ENCODE measurements at regions of chr7 and their contacts with region 1.

Region 1: DNA sequence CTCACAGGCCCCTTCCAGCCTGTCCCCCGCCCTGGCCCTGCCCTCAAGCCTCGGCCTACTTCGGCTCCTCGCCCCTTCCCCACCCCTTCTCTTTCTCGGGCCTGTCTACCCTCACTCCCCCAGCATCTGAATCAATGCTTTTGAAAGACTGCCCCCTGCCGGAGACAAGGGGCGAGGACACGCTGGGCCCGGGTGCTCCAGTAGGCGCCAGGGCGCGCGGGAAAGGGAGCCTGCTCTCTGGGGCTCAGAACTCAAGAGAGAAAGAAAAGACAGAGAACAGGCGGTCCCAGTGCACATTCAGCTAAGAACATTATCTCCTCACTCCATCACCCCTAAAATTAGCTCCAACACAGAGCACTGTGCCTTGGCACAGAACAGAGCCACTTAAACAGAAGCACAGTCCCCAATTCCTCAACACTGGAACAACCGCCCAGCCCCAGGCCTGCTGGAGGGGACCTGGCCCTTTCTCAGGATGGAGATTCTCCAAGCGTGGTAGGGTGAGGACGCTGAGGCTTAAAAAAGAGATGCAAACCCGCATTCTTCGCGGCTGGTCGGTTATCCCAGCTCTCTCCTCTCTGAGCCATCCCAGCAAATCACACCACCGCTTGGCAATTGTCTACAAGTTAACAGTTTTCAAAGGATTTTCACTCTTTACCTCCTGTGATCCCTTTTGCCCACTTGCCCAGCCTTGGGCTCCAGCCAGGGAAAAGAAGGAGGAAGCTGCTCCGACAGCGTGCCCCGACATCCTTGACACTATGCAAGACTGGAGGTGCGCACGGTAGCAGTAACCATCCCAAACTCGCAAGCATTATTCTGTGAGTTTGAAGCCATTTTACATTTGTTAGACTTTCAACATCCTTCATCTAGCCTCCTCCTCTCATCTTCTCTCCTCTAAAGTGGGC is 2.1 kb downstream of the GIGYF1 start:
- DNase-seq: peak; percentile 86
- ATAC-seq: peak; percentile 76
- H3K4me3 Mint-ChIP-seq: peak overlapping the region; percentile 96
- H3K27ac Mint-ChIP-seq: peak overlapping the region; percentile 71
- H3K4me1 Mint-ChIP-seq: peaks cover 28% of the 10 kb centered on the region
- H3K27me3 Mint-ChIP-seq: peaks cover 13% of the 10 kb centered on the region

Region 2: DNA sequence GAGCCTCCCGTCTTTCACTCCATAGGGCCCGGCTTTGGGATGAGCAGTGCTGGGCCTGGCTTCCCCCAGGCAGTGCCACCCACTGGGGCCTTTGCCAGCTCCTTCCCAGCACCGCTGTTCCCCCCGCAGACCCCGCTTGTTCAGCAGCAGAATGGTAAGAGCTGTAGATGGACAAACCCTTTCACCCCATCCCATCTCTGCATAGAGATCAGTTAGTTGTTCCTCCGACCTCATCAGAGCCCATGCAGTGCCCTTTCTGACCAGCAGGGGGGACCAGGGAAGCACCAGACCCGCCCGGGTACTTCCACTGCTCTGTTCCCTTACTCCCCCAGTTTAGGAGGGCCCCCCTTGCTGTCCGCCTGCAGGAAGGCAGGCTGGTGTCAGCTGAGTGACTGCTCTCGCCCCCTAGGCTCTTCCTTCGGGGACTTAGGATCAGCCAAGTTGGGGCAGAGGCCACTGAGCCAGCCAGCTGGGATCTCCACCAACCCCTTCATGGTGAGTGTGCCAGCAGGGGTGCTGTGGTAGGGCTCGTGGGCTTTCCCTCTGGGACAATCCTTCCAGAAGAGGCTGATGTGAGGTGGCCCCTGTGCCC is 128.0 kb before region 1 on chr7:
- CTCF ChIA-PET with region 1: interaction called, 23 read pairs
- DNase-seq: peak; percentile 87
- ATAC-seq: peak; percentile 62
- H3K4me3 Mint-ChIP-seq: no peak overlapping the region
- H3K27ac Mint-ChIP-seq: peak overlapping the region; percentile 44
- H3K4me1 Mint-ChIP-seq: peaks cover 31% of the 10 kb centered on the region
- H3K27me3 Mint-ChIP-seq: no peaks in the 10 kb centered on the region

Region 3: GRCh38 chr7:100611974-100612729 is 79.8 kb before region 1 on chr7 and contains the start of gene MOSPD3:
- CTCF ChIA-PET with region 1: interaction called, 49 read pairs
- DNase-seq: peak; percentile 99
- ATAC-seq: peak; percentile 95
- H3K4me3 Mint-ChIP-seq: peak within 1 kb of the TSS; percentile 87
- H3K27ac Mint-ChIP-seq: peak within 1 kb of the TSS; percentile 100
- H3K4me1 Mint-ChIP-seq: peaks cover 22% of the 10 kb centered on the region
- H3K27me3 Mint-ChIP-seq: no peaks in the 10 kb centered on the region
- total RNA-seq, gene MOSPD3: 22.2 to 28.8 TPM

Region 4: GRCh38 chr7:100632951-100633717 is 58.8 kb before region 1 on chr7:
- CTCF ChIA-PET with region 1: interaction called, 77 read pairs
- DNase-seq: peak; percentile 79
- ATAC-seq: peak; percentile 82
- H3K4me3 Mint-ChIP-seq: peak overlapping the region; percentile 82
- H3K27ac Mint-ChIP-seq: peak overlapping the region; percentile 92
- H3K4me1 Mint-ChIP-seq: peaks cover 40% of the 10 kb centered on the region
- H3K27me3 Mint-ChIP-seq: no peaks in the 10 kb centered on the region

Region 5: DNA sequence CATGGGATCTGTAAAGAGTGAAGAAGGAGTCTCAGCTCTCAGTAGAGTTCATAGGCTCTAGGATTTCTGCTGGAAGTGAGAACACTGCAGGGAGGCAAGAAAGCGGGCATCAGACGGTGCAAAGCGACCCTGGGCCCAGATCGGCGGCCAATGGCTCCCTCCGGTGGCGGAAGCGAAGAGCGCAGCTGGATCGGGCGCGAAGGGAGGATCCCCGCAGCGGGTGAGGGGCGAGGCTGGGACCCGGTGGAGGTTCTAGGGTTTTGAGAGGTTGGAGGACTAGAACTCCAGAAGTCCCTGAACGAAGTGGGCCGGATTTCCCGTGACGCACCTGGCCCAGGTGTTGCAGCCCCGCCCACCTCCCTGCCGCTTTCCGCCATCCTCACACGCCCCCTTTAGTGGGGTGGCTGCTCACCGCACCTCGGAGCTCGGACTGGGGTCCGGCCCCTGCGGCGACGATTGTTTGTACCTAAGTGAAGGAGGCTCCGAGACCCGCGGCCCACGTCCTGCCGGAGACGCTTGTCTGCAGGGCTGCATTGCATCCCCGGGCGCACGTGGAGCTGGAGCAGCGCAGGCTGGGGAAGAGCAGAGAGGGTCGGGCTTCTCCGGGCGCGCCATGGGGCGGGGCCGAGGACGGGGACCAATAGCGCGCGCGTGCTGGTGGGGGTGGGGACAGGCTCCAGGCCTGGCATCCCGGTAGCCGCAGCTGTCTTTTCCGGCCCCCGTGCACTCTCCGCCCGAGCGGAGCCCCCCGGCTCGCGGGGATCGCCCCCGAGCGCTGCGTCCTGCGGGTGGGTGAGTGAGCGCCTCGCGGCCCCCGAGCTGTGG is 160.3 kb after region 1 on chr7 and contains the start of gene SLC12A9:
- CTCF ChIA-PET with region 1: interaction called, 11 read pairs
- DNase-seq: peak; percentile 91
- ATAC-seq: peak; percentile 99
- H3K4me3 Mint-ChIP-seq: peak within 1 kb of the TSS; percentile 89
- H3K27ac Mint-ChIP-seq: peak within 1 kb of the TSS; percentile 67
- H3K4me1 Mint-ChIP-seq: peaks cover 21% of the 10 kb centered on the region
- H3K27me3 Mint-ChIP-seq: no peaks in the 10 kb centered on the region
- total RNA-seq, gene SLC12A9: 28.6 to 30.1 TPM

Region 6: GRCh38 chr7:100882785-100883526 is 191.0 kb after region 1 on chr7:
- CTCF ChIA-PET with region 1: no interaction called
- DNase-seq: no peak
- ATAC-seq: no peak
- H3K4me3 Mint-ChIP-seq: no peak overlapping the region
- H3K27ac Mint-ChIP-seq: peak overlapping the region; percentile 44
- H3K4me1 Mint-ChIP-seq: peaks cover 75% of the 10 kb centered on the region
- H3K27me3 Mint-ChIP-seq: no peaks in the 10 kb centered on the region

Measured in activated CD8-positive, alpha-beta memory T cell treated with anti-CD3 and anti-CD28 coated beads, Interleukin-2, amount 10 ng/mL, durations not matched to agents 7 days and 5 days (primary cell).